Sciatic nerve (tissue), 2 donors: ENCODE measurements at regions of chr1 and their contacts with region 1.

Region 1: DNA sequence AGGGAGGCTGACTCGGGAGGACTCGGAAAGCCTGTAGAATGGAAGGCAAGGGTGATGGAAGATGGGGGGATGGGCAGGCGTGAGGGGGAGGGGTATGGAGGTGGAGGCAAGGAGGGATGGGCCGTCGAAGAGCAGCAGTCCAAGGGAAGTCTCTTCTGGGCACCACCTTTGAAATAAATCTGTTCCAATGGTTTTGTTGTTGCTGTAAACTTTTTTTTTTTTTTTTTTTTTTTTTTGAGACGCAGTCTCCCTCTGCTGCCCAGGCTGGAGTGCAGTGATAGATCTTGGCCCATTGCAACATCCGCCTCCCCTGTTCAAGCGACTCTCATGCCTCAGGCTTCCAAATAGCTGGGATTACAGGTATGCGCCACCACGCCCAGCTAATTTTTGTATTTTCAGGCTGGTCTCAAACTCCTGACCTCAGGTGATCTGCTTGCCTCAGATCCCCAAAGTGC is 79.0 kb upstream of the SLC45A1 start:
- DNase-seq: no peak
- ATAC-seq: peak; percentile 90

Region 2: DNA sequence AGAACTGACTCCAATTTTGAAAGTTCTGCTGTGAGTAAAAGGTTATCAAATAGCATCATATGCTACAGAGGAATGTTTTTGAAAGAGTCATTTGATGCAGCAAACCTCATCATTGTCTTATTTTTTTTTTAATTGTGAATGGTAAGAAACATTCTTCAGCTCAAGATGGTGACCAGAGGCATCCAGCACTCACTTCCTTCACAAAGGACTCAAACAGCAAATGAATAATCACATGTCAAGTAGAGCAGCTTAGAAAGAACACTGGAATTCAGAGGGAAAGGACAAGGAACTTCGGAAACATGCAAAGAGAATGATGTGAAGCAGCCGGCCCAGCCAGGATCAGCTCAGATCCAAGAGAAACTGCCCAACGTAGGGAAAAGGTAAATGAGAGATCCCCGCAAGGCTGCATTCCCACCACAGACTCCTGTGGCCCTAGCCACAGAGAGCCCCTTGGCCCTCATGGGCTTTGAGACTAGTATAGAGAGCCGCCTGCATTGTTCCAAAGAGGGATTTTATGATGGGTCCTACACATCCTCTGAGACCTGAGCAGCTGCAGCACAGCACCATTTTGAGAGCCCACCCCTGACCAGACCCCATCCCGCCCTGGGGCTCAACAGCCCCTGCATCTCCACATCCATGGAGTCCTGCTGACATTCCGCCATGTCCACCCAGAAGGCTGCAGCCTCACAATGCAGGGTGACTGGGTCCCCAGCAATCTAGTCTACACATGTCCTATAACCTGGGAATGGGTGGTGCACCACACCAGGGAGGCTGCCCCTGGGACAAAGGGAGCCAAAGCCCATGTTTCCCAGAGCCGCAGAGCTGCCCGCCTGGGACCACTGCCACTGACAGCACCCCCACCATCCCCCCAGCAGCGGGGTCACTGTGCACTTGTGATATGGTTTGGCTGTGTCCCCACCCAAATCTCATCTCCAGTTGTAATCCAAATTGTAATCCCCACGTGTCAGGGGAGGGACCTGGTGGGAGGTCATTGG is 364.8 kb before region 1 on chr1:
- intact Hi-C with region 1: no loop called
- DNase-seq: no peak
- ATAC-seq: no peak

Region 3: DNA sequence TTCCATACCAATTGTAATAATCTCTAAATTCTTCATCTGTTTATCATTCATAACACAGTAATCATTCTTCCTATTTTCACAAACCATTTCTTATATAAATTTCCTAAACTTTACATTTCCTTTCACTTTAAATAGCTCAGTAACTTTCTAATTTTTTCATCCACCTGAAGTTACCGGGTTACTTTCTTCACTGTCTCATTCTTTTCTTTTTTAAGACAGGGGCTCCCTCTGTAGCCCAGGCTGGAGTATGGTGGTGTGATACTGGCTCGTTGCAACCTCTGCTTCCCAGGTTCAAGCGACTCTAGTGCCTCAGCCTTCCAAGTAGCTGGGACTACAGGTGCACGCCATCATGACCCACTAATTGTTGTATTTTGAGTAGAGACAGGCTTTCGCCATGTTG is 537.2 kb after region 1 on chr1:
- intact Hi-C with region 1: loop called (anchors 5 kb)
- DNase-seq: no peak
- ATAC-seq: no peak